ENCODE measurements at regions of chr5 and their contacts with region 1.

Region 1: DNA sequence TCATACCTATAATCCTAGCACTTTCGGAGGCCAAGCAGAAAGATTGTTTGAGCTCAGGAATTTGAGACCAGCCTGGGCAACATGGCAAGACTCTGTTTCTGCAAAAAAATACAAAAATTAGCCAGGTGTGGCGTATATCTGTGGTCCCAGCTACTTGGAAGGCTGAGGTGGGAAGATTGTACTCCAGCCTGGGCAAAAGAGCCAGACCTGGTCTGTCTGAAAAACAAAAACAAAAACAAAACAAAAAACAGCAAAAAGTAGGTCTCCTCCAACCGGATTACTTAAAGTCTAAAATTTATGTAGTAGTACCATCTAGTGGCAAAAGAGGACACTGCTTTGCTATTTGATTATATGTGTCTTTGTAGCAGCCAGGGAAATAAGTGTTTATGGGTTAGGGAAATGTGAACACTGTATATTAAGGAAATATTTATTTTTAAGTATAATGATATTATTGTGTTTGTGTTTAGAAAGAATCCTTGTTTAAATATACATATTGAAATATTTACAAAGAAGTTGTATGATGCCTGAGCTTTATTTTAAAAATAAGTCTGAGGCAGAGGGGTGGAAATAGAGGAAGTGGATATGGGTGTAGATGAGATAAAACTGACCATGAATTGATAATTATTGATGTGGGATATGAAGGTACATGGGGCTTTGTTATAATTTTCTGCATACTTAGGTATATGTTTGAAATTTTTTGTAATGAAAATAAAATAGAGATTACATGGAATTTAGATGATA is 20.0 kb downstream of the APC start:
- DNase-seq: peak; percentile 65
- H3K4me3 Mint-ChIP-seq: no peak overlapping the region
- H3K27ac Mint-ChIP-seq: no peak overlapping the region
- H3K4me1 Mint-ChIP-seq: peaks cover 2% of the 10 kb centered on the region
- H3K27me3 Mint-ChIP-seq: no peaks in the 10 kb centered on the region

Region 2: DNA sequence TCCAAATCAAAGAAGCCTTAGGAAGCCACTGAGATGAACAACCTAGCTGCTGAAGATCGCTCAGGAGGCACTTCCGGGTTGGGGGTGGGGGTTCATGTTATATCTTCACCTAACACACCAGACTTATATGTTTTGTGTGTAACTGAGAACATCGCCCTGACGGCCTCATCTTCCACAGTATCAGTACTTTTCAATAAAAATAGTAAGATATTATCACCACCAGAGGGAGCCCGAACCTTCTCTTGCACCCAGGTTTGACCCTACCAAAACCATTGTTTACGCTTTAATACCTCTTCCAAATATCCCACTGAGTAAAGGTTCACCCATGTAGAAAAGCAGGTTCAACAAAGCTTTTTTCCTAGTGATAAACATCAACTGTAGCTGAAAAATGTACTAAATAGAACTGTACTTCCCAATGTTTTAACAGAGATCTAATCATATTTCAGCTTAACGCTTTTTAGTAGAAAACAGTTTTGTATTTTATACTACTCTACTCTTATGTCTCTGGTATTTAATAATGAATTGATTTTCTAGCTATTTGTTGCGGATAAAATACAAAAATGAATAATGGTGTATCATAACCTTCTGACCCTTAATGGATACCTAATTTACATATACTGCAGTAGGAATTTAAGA is 582.6 kb before region 1 on chr5:
- intact Hi-C with region 1: loop called (anchors 2 kb)
- DNase-seq: peak; percentile 75
- H3K4me3 Mint-ChIP-seq: no peak overlapping the region
- H3K27ac Mint-ChIP-seq: no peak overlapping the region
- H3K4me1 Mint-ChIP-seq: no peaks in the 10 kb centered on the region
- H3K27me3 Mint-ChIP-seq: peaks cover 22% of the 10 kb centered on the region

Region 3: DNA sequence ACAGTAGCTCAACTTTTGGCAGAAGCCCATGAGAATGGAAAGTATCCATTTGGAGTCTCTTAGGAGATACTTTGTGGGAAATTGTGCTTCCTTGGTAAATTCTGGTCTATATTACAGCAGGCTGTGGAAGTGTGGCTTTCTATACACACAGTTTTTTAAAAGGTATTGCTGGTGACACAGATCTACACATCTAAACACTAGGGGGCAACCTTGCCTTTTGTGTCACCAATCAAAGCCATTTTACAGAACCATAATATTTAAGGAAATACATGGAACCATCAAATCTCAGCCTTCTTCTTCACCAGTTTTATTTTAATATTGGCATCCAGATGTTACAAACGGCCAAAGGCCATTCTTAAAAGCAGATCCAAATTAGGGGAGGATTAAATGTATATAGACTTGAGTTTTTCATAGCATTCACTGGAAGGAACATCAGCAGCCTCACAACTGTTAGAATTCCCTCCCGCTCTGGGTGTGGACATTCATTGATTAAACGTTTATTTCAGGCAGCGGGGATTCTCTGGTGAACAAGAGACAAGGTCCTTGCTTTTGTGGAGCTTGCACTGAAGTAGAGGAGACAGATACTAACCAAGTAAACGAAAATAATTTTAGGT is 206.1 kb before region 1 on chr5:
- intact Hi-C with region 1: loop called (anchors 1 kb)
- DNase-seq: peak; percentile 79
- H3K4me3 Mint-ChIP-seq: no peak overlapping the region
- H3K27ac Mint-ChIP-seq: no peak overlapping the region
- H3K4me1 Mint-ChIP-seq: peaks cover 2% of the 10 kb centered on the region
- H3K27me3 Mint-ChIP-seq: peaks cover 20% of the 10 kb centered on the region

Region 4: DNA sequence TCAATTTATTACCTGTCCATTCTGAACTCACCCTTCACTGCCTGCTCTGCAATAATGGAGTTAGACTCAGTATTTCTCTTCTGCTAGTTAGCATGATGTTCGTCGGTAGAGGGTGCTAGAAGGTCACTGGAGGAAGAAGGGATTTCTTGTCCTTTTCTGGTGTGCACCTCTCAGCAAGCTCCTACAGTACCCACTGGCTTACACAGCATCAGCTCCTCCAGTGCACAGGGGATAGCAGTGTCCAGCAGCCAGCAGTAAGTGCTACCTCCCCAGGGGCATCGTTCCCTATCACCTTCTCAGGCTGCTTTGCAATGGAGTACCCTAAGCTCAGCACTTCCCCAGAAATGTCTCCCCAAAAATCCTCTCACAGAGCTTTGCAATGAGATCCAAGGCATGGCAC is 65.9 kb before region 1 on chr5:
- intact Hi-C with region 1: loop called (anchors 1 kb)
- DNase-seq: peak; percentile 76
- H3K4me3 Mint-ChIP-seq: no peak overlapping the region
- H3K27ac Mint-ChIP-seq: no peak overlapping the region
- H3K4me1 Mint-ChIP-seq: peaks cover 2% of the 10 kb centered on the region
- H3K27me3 Mint-ChIP-seq: peaks cover 51% of the 10 kb centered on the region

Region 5: GRCh38 chr5:112860929-112861637 is 103.4 kb after region 1 on chr5 and contains the start of gene SRP19:
- intact Hi-C with region 1: no loop called
- DNase-seq: peak; percentile 98
- H3K4me3 Mint-ChIP-seq: peak within 1 kb of the TSS; percentile 95
- H3K27ac Mint-ChIP-seq: peak within 1 kb of the TSS; percentile 94
- H3K4me1 Mint-ChIP-seq: peaks cover 18% of the 10 kb centered on the region
- H3K27me3 Mint-ChIP-seq: peaks cover 17% of the 10 kb centered on the region
- total RNA-seq, gene SRP19: 67.4 and 74.3 TPM in 2 replicates

Region 6: DNA sequence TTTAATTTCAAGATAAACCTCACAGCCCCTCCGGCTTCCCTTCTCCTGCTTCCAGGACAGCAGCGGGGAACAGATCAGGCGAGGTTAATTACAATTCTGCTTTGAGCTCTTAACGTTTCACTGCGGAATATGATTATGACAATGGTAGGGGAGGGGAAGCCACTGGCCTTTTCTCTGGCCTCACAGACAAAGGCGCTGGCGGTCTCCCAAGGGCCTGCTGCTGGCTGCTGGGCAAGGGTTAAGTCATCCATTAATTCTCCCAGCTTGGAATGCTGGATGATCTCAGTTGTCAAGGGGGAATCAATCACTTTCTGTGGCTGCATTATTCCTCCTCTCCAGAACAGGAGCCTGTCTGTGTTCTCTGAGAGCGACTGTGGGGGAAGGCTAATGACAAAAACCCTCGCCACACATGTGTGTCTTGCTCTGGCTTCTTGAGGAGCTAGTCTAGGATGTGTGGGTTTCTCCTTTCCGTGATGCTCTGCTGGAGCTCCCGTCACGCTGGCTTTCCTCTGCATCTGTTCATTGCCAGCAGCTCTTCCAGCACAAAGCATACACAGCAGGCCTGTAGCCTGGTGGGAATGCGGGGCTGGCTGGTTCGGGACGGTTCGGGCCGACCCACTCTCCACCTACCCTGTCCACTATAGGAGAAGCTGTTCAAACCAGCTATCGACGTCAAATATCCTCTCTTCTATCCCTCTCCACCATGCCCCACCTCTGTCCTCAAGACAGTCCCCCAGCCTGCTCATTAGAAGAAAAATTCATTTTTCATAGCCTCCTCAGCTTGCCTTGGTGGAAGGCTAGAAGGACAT is 301.8 kb after region 1 on chr5:
- intact Hi-C with region 1: no loop called
- DNase-seq: no peak
- H3K4me3 Mint-ChIP-seq: no peak overlapping the region
- H3K27ac Mint-ChIP-seq: no peak overlapping the region
- H3K4me1 Mint-ChIP-seq: peaks cover 21% of the 10 kb centered on the region
- H3K27me3 Mint-ChIP-seq: no peaks in the 10 kb centered on the region

Measured in activated CD4-positive, alpha-beta T cell treated with anti-CD3 and anti-CD28 coated beads, Interleukin-2, amount 10 ng/mL, durations not matched to agents 24 days and 14 days (primary cell).